ENCODE measurements at regions of chr4 and their contacts with region 1.

Region 1: GRCh38 chr4:69167300-69167699 is 47.2 kb downstream of the UGT2B11 start:
- DNase-seq: no peak

Region 2: GRCh38 chr4:68498413-68499007 is 668.8 kb before region 1 on chr4:
- intact Hi-C with region 1: loop called (anchors 1 kb)
- DNase-seq: peak in 7 of 10 donors; percentile 22 to 84 (median 54)